ENCODE measurements at regions of chr2 and their contacts with region 1.

Region 1: DNA sequence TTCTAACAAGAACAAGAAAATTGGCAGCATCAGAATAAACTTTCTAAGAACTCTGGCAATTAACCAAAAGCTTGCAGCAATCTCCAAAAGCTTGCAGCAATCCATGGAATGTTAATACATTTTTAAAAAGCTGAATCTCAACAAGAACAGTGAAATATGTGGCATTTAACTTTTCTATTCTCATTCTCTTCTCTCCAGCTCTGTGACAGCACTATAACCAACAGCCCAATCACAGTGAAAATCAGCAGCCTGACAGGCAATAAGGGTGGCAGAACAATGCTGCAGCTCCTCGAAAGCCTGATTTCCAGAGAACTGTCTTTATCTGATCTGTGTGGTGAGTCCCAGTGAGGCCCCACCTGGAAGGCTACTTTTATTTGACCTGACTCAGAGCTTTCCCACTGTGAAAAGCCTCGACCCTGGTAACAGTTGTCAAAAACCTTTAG is 60.0 kb downstream of the TMEM131 start:
- DNase-seq: no peak
- ATAC-seq: peak; percentile 51 to 54
- H3K4me3 ChIP-seq: peak overlapping the region in 1 of 4 donors; percentile 25
- H3K27ac ChIP-seq: peak overlapping the region; percentile 80 to 92 (median 84)
- H3K4me1 ChIP-seq: peaks cover 62 to 71% of the 10 kb centered on the region in 2 donors
- H3K27me3 ChIP-seq: no peaks in the 10 kb centered on the region
- CTCF ChIP-seq: no peak
- POLR2A ChIP-seq: no peak

Region 2: DNA sequence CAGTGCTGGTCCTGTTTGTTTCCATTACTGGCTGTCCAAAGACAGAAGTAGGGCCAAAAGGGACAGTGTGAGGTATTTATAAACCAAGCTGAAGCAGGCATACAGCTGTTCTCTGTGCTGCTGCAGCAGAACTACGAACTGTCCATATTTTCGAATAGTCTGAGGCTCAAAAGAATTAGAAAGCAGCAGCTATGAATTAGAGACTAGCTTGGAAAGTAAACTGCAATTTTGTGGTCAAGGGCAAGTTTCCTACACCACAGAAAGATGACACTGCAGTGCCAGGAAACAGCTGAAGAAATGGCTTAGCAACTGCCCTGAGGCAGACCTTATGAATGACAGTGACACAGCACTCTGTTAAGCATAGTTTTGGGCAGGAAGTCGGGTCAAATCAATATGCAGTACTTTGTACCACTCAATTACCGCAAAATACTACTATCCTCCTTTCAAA is 65.3 kb before region 1 on chr2:
- in situ Hi-C with region 1: no loop called
- intact Hi-C with region 1: loop called (anchors 1 kb)
- DNase-seq: peak; percentile 60 to 63
- ATAC-seq: peak; percentile 85 to 90
- H3K4me3 ChIP-seq: peak overlapping the region in 3 of 4 donors; percentile 16 to 31 (median 30)
- H3K27ac ChIP-seq: peak overlapping the region; percentile 88 to 95 (median 92)
- H3K4me1 ChIP-seq: peaks cover 58 to 65% of the 10 kb centered on the region in 2 donors
- H3K27me3 ChIP-seq: no peaks in the 10 kb centered on the region
- CTCF ChIP-seq: no peak
- POLR2A ChIP-seq: peak in 1 of 2 donors; percentile 18

Region 3: GRCh38 chr2:97988722-97989121 is 53.0 kb after region 1 on chr2:
- in situ Hi-C with region 1: no loop called
- intact Hi-C with region 1: loop called (anchors 5 kb)
- DNase-seq: no peak
- ATAC-seq: peak in 1 of 2 donors; percentile 67
- H3K4me3 ChIP-seq: no peak overlapping the region
- H3K27ac ChIP-seq: peak overlapping the region; percentile 9 to 52 (median 44)
- H3K4me1 ChIP-seq: peaks cover 67 to 74% of the 10 kb centered on the region in 2 donors
- H3K27me3 ChIP-seq: no peaks in the 10 kb centered on the region
- CTCF ChIP-seq: no peak
- POLR2A ChIP-seq: no peak

Region 4: GRCh38 chr2:98608116-98608999 is 672.6 kb after region 1 on chr2 and contains the starts of genes COA5 and UNC50:
- in situ Hi-C with region 1: no loop called
- intact Hi-C with region 1: loop called (anchors 10 kb)
- DNase-seq: peak; percentile 79 to 85
- ATAC-seq: peak; percentile 90
- H3K4me3 ChIP-seq: peak within 1 kb of the TSS; percentile 70 to 90 (median 86)
- H3K27ac ChIP-seq: peak within 1 kb of the TSS; percentile 91 to 97 (median 94)
- H3K4me1 ChIP-seq: peaks cover 53 to 59% of the 10 kb centered on the region in 2 donors
- H3K27me3 ChIP-seq: no peaks in the 10 kb centered on the region
- CTCF ChIP-seq: no peak
- POLR2A ChIP-seq: peak; percentile 79 to 89
- total RNA-seq, gene COA5: 26.1 to 45.1 (median 31.0) TPM
- total RNA-seq, gene UNC50: 30.3 to 43.1 (median 30.5) TPM

Measured in gastrocnemius medialis (tissue), 4 donors.